Motor neuron (in vitro differentiated cells): ENCODE measurements at regions of chr1 and their contacts with region 1.

Region 1: DNA sequence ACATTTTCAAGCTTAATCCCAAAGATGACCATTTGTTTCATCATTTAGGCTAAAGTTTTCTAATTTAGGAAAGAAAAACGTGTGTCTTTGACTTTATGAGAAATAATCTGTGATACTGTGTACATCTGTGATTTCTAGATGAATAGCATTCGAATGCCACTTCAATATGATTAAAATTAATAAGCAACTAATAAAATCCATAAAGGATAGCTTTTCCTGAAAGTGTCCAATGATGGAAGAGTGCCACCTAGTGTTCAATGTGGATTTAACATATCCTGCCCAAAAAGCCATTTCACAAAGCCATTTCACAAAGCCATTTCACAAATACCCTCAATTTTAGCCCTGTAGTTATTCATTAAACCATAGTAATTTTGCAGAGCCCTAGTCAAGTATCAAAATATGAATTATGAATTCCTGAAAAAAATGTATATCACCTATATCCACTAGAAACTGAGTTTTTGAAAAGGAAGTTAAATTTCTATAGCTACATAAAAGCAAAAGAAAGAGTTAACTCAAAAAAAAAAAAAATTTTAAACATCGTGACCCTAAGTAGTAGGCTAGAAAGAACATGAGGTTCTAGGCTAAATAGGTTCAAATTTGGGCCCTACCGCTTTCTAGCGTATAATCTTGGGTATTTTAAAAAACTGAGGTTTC is 19.1 kb downstream of the NME7 start:
- ATAC-seq: peak in 2 of 8 experiments; percentile 25 to 39
- H3K4me3 ChIP-seq: no peak overlapping the region
- H3K27ac ChIP-seq: no peak overlapping the region
- H3K4me1 ChIP-seq: peaks cover 0 to 5% of the 10 kb centered on the region in 2 donors

Region 2: DNA sequence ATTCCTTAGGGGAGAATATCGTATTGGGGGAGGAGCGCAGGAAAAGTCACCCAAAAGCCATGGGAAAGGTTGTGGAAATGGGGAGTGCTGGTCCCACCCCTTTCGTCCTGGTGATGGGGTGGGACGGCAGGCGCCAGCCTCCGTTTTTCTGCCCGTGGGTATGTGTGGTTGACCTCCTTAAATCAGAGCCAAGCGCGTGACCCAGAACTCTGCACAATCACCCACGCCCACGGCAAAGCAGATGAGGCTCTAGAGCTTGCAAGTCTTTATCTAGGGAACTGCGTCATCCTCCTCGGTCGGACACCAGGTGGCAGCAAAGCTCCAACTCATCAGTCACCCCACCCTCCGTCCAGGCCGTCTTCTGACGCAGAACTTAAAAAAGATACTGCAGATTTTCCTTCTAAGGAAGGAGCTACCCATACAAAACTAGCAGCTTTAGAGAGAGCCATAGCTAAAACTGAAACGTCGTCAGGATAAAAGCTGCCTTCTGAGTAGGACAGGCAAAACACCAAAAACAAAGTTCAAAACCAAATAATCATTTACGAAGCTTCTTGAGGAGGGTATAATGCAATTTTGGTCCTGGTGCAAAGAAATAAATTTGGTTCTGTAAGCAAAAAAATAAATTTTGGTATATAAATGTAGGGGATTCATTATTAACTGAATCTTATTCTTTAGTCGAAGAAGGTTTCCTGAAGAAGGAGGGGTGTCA is 1005.8 kb before region 1 on chr1:
- in situ Hi-C with region 1: loop called in 2 of 9 experiments (anchors 25 kb)
- ATAC-seq: peak; percentile 95 to 100 (median 100)
- H3K4me3 ChIP-seq: no peak overlapping the region
- H3K27ac ChIP-seq: no peak overlapping the region
- H3K4me1 ChIP-seq: peaks cover 0 to 2% of the 10 kb centered on the region in 2 donors

Region 3: GRCh38 chr1:169106095-169106920 is 242.2 kb before region 1 on chr1 and contains the start of gene ATP1B1:
- in situ Hi-C with region 1: loop called in 1 of 9 experiments (anchors 25 kb)
- ATAC-seq: peak; percentile 78 to 89 (median 83)
- H3K4me3 ChIP-seq: peak within 1 kb of the TSS; percentile 63 to 99 (median 96)
- H3K27ac ChIP-seq: peak within 1 kb of the TSS; percentile 84 to 94
- H3K4me1 ChIP-seq: peaks cover 29 to 41% of the 10 kb centered on the region in 2 donors
- total RNA-seq, gene ATP1B1: 4.6 to 271 (median 153) TPM

Region 4: GRCh38 chr1:169193191-169193850 is 155.2 kb before region 1 on chr1:
- in situ Hi-C with region 1: no loop called
- ATAC-seq: peak in 3 of 8 experiments; percentile 24 to 61 (median 46)
- H3K4me3 ChIP-seq: no peak overlapping the region
- H3K27ac ChIP-seq: no peak overlapping the region
- H3K4me1 ChIP-seq: peaks cover 3 to 12% of the 10 kb centered on the region in 2 donors